Dorsolateral prefrontal cortex (tissue), 120 donors: ENCODE measurements at regions of chrX and their contacts with region 1.

Region 1: DNA sequence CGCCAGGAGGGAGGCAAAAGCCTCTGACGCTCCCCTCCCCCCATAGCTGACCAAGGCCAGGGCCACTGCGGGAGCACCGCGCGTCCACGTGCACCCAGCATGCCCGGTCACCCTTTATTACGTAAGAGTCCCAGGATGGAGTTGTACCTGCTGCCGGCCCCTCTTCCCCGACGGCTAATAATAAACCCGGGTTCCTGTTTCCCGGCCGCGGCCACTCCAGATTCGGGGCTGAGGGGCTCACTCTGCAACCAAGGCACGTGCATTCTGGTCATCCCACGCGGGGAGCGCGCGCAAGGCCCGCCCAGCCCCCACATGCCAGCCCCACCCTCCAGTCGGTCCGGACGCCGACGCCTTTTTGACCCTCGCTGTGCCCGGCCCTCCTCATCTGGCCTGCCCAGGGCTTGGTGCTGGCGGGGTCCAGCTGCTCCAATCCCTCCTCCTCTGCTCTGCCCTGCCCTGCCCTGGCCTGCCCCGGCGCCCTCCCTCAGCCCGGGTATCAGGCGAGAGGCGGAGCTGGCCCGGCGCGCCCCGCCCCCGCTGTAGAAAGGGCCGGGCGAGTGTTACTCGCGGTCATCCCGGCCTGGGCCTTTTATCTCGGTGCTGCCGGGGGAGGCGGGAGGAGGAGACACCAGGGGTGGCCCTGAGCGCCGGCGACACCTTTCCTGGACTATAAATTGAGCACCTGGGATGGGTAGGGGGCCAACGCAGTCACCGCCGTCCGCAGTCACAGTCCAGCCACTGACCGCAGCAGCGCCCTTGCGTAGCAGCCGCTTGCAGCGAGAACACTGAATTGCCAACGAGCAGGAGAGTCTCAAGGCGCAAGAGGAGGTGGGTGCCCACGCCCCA is 2.5 kb downstream of the MID1IP1 start:
- DNase-seq: peak; percentile 32 to 90 (median 82)
- H3K4me3 ChIP-seq: peak overlapping the region; percentile 45 to 81 (median 65)
- H3K27ac ChIP-seq: peak overlapping the region; percentile 49 to 96 (median 89)
- H3K27me3 ChIP-seq: peaks cover 0 to 55% (median 7%) of the 10 kb centered on the region in 45 donors
- CTCF ChIP-seq: peak in 3 of 56 donors; percentile 6 to 29 (median 18)

Region 2: GRCh38 chrX:37472806-37473205 is 1331.0 kb before region 1 on chrX:
- intact Hi-C with region 1: no loop called
- DNase-seq: no peak
- H3K4me3 ChIP-seq: no peak overlapping the region
- H3K27ac ChIP-seq: no peak overlapping the region
- H3K27me3 ChIP-seq: peaks cover 0 to 90% (median 20%) of the 10 kb centered on the region in 45 donors
- CTCF ChIP-seq: no peak

Region 3: DNA sequence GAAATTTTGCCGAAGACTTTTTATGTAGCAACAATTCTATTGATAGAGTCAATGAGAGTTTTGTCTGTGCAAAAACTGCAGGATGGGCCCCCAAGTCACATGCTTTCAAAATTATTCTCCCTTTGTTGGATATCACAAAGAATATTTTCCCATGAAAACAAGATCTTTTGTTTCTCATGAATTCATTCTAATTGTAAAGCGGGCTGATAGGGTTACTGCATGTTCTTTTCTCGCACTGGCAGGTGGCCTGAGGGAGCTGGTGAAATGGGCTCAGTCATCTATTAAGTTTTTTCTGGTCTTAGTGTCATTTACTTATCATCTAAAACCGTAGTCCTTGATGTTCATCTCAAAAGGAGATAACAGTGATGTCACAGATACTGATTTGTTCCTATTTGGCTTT is 41.6 kb after region 1 on chrX:
- intact Hi-C with region 1: loop called (anchors 1 to 5 kb)
- DNase-seq: peak in 1 of 10 donors; percentile 46
- H3K4me3 ChIP-seq: peak overlapping the region in 2 of 59 donors; percentile 3 to 12
- H3K27ac ChIP-seq: peak overlapping the region in 43 of 59 donors; percentile 6 to 88 (median 64)
- H3K27me3 ChIP-seq: peaks cover 0 to 74% (median 15%) of the 10 kb centered on the region in 45 donors
- CTCF ChIP-seq: no peak

Region 4: GRCh38 chrX:38985375-38985774 is 181.6 kb after region 1 on chrX:
- intact Hi-C with region 1: loop called (anchors 5 to 10 kb)
- DNase-seq: no peak
- H3K4me3 ChIP-seq: no peak overlapping the region
- H3K27ac ChIP-seq: no peak overlapping the region
- H3K27me3 ChIP-seq: peaks cover 0 to 62% (median 7%) of the 10 kb centered on the region in 45 donors
- CTCF ChIP-seq: peak in 50 of 56 donors; percentile 7 to 59 (median 35)

Region 5: GRCh38 chrX:39065051-39065871 is 261.5 kb after region 1 on chrX:
- intact Hi-C with region 1: loop called in 1 of 2 experiments (anchors 10 kb)
- DNase-seq: peak in 5 of 10 donors; percentile 11 to 69 (median 47)
- H3K4me3 ChIP-seq: peak overlapping the region in 14 of 59 donors; percentile 0 to 30 (median 15)
- H3K27ac ChIP-seq: peak overlapping the region in 12 of 59 donors; percentile 11 to 57 (median 32)
- H3K27me3 ChIP-seq: peaks cover 0 to 61% (median 8%) of the 10 kb centered on the region in 45 donors
- CTCF ChIP-seq: peak in 1 of 56 donors; percentile 8

Region 6: GRCh38 chrX:39149761-39150160 is 346.0 kb after region 1 on chrX:
- intact Hi-C with region 1: loop called (anchors 5 to 10 kb)
- DNase-seq: peak; percentile 28 to 75 (median 65)
- H3K4me3 ChIP-seq: peak overlapping the region in 1 of 59 donors; percentile 3
- H3K27ac ChIP-seq: no peak overlapping the region
- H3K27me3 ChIP-seq: peaks cover 0 to 79% (median 18%) of the 10 kb centered on the region in 45 donors
- CTCF ChIP-seq: peak; percentile 48 to 90 (median 72)

Region 7: GRCh38 chrX:40108959-40109287 is 1305.1 kb after region 1 on chrX:
- intact Hi-C with region 1: loop called in 1 of 2 experiments (anchors 10 kb)
- DNase-seq: peak in 7 of 10 donors; percentile 54 to 81 (median 59)
- H3K4me3 ChIP-seq: peak overlapping the region; percentile 12 to 75 (median 58)
- H3K27ac ChIP-seq: peak overlapping the region in 56 of 59 donors; percentile 38 to 92 (median 82)
- H3K27me3 ChIP-seq: peaks cover 0 to 94% (median 49%) of the 10 kb centered on the region in 45 donors
- CTCF ChIP-seq: peak in 1 of 56 donors; percentile 18